Aorta (tissue), 5 donors: ENCODE measurements at regions of chr11 and their contacts with region 1.

Region 1: DNA sequence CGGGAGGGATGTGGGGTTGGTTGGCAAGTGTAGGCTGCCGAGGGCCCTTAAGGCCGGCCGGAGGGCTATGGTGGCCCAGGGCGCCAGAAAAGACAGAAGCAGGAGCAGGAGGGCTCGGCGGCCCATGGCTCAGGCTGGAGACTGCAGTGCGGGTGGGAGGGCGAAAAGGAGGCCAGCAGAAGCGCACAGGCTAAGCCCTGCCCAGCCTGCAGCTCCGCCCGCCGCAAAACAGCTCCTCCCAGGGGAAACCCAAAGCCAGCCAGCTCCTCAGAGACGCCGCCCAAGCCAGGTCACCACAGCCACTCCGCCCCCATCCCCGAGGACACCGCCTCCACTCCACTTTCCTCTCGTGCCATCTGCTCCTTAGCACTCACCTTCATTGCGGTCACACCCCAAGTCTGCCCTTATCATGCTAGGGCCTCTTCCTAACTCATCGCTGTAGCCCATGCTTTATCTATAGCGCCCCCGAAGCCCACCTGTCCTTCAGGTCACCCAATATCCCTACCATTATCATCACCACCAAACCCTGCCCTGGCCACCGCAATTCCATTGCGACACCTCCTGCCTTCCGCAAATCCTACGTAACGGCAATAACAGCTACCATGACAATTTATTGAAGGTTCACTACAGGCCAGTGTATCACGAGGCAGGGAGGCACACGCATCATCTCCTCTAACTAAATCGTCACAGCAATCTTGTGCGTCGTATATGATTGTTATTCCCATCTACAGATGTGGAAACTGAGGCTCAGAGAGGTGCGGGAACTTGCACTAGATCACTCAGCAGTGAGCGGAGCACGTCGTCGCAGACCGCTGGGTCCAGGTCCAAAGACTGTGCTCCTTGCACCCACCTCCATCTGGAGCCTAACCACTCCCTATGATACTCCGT is at the start of gene PRCP:
- DNase-seq: peak; percentile 97
- ATAC-seq: peak; percentile 96
- H3K4me3 ChIP-seq: peak within 1 kb of the TSS; percentile 51 to 62
- H3K27ac ChIP-seq: peak within 1 kb of the TSS; percentile 43 to 69
- H3K4me1 ChIP-seq: peaks cover 0 to 2% of the 10 kb centered on the region in 2 donors
- H3K27me3 ChIP-seq: no peaks in the 10 kb centered on the region
- total RNA-seq, gene PRCP: 93.7 to 183 TPM

Region 2: GRCh38 chr11:82474885-82475284 is 425.6 kb before region 1 on chr11:
- intact Hi-C with region 1: no loop called
- DNase-seq: no peak
- ATAC-seq: no peak
- H3K4me3 ChIP-seq: no peak overlapping the region
- H3K27ac ChIP-seq: no peak overlapping the region
- H3K4me1 ChIP-seq: no peaks in the 10 kb centered on the region
- H3K27me3 ChIP-seq: no peaks in the 10 kb centered on the region

Region 3: DNA sequence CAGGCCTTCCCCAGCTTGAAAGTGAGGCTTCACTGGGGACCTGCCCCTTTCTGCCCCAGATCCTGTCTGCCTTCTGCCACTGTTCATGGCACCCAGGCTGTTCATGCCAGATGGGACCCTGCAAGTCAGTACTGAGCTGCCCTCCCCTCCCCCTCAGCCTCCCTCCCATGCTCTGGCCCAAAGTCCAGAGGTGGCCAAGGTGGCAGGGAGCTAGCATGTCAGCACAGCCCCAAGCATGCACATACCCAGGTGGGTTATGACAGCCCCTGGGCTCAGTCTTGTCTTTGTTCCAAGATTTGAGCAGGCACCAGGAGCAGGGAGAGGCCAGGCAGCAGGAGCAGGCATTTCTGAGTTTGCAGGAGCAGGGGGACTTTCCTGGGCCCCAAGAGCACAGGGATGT is 45.2 kb after region 1 on chr11:
- intact Hi-C with region 1: no loop called
- DNase-seq: no peak
- ATAC-seq: no peak
- H3K4me3 ChIP-seq: no peak overlapping the region
- H3K27ac ChIP-seq: no peak overlapping the region
- H3K4me1 ChIP-seq: no peaks in the 10 kb centered on the region
- H3K27me3 ChIP-seq: no peaks in the 10 kb centered on the region

Region 4: DNA sequence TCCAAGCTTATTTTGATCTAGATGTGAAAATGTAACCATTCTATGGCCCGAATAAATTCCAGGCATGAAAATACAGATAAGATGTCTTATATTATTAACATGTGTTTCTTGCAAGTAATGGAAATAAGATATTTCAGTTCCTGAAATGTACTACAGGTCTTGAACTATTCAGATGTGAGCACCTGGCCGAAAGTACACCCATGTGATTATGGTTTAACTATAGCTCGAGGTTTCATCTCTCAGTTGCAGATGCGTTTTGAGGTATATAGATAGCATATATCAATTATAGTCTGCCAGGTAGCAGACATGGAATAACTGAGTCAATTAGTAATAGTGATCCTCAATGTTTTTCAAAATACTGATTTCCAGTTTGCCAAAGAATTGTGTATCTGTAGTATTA is 69.3 kb after region 1 on chr11:
- intact Hi-C with region 1: no loop called
- DNase-seq: no peak
- ATAC-seq: no peak
- H3K4me3 ChIP-seq: no peak overlapping the region
- H3K27ac ChIP-seq: no peak overlapping the region
- H3K4me1 ChIP-seq: no peaks in the 10 kb centered on the region
- H3K27me3 ChIP-seq: no peaks in the 10 kb centered on the region

Region 5: GRCh38 chr11:82980292-82980691 is 79.8 kb after region 1 on chr11:
- intact Hi-C with region 1: loop called in 1 of 2 experiments (anchors 10 kb)
- DNase-seq: no peak
- ATAC-seq: no peak
- H3K4me3 ChIP-seq: no peak overlapping the region
- H3K27ac ChIP-seq: no peak overlapping the region
- H3K4me1 ChIP-seq: peaks cover 0 to 9% of the 10 kb centered on the region in 2 donors
- H3K27me3 ChIP-seq: no peaks in the 10 kb centered on the region

Region 6: GRCh38 chr11:83156150-83156995 is 255.9 kb after region 1 on chr11:
- intact Hi-C with region 1: loop called (anchors 2 to 10 kb)
- DNase-seq: peak; percentile 99
- ATAC-seq: peak; percentile 97
- H3K4me3 ChIP-seq: peak overlapping the region; percentile 82 to 97
- H3K27ac ChIP-seq: peak overlapping the region; percentile 30 to 83
- H3K4me1 ChIP-seq: no peaks in the 10 kb centered on the region
- H3K27me3 ChIP-seq: no peaks in the 10 kb centered on the region

Region 7: DNA sequence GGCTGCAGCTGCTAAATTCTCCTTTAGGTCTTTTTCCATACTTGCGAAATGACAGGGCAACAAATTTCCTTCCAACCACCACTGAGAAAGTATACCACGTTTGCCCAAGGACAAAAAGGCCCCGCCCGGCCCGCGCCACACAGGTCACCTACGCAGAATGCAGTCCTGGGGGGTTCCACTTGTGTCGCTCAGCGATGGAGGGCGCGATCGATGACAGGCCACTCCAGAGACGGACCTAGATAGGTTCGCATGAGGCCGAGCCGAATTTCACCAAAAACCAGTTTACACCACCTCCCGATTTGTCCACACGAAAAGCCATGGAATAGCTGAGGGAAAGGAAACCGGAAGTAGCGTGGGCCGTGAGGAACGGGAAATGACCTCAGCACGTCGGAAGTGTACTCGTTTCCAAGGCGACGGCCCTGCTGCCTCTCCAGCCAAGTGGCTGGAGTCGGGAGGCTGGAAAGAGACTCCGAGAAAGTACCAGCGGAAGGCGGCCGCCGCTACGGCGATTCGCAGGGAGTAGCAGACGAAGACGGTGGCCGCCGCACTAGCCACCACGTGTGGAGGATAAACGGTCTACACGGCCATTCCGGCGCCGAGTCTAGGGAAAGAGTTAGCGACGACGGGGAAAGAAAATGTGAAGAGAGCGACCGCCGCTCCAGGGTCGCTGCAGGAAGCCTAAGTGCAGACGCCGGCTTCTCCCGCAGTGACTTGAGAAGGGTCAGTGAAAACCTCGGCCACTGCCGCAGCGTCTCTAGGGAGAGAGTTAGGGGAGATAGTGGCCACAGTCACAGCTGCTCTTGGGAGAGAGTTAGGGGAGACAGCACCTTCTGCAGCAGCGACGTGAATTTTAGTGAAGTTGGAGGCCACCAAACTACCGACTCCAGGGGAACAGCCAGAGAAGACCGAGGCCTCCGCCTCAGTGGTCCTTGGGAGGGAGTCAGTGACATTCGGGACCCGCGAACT is 293.1 kb after region 1 on chr11 and contains the start of gene ANKRD42:
- intact Hi-C with region 1: loop called (anchors 5 to 10 kb)
- DNase-seq: peak; percentile 96 to 97
- ATAC-seq: peak; percentile 97
- H3K4me3 ChIP-seq: peak within 1 kb of the TSS; percentile 97 to 98
- H3K27ac ChIP-seq: peak within 1 kb of the TSS; percentile 15 to 95
- H3K4me1 ChIP-seq: peaks cover 6 to 19% of the 10 kb centered on the region in 2 donors
- H3K27me3 ChIP-seq: no peaks in the 10 kb centered on the region
- total RNA-seq, gene ANKRD42: 12.9 to 14.7 TPM

Region 8: DNA sequence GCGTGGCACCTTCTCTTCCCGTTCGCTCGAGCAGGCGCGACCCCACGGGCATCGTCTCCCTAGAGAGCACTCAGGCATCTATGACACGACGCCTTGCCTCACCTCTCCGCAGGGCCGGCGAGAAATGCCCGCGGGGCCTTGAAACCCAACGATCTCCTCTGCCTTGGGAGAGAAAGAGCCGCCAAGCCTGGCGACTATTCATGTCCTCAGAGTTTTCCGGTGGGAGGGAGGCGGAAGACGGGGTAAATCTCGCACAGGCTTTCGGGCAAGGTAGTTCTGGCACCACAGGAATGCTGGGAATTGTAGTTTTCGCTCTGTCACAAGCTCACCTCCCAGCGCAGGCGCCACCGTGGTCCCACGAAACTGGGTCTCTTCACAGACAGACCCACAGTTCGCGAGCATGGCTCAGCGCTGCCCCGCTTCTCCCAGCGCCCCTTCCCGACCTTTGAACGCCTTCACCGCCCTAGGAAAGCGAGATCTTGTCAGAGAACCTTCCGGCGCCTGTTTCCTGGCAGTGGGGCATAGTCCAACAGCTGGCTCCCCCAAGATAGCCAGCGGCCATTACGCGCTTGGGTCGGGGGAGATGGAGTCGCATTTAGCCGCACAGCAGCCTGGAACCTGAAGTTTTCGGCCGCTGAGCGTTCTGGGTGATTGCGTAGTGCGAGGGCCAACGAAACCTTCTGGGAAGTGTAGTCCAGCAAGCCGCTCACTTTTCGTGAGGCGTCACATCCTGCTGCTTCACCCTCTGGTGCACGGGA is 385.4 kb after region 1 on chr11 and contains the start of gene CCDC90B:
- intact Hi-C with region 1: loop called (anchors 1 to 10 kb)
- DNase-seq: peak; percentile 97 to 98
- ATAC-seq: peak; percentile 99
- H3K4me3 ChIP-seq: peak within 1 kb of the TSS; percentile 68 to 86
- H3K27ac ChIP-seq: peak within 1 kb of the TSS in 1 of 2 donors; percentile 99
- H3K4me1 ChIP-seq: peaks cover 0 to 5% of the 10 kb centered on the region in 2 donors
- H3K27me3 ChIP-seq: no peaks in the 10 kb centered on the region
- total RNA-seq, gene CCDC90B: 35.0 to 38.6 TPM

Region 9: DNA sequence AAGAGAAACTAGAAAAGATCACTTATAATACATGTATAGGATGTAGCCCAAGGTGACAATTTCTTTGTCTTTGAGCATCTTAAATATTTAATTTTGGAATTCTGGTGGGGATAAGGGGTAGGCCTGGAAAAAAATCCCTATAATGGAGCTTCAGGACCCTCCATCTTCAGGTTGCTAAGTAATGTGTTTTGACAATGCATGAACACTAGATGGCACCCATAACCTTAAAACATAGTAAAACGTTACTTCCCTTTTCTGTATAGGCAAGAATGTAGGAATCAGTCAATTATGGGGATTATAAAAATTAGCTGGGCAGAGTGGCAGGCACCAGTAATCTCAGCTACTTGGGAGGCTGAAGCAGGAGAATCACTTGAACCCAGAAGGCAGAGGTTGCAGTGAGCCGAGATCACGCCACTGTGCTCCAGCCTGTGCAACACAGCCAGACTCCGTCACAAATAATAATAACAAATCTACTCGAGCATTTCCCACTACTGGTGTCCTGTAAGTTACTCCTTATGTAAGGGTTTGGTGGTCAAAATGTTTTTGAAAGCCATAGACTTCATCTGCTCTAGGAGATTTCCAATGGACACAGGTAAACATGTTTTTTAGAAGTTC is 927.5 kb after region 1 on chr11:
- intact Hi-C with region 1: loop called (anchors 10 kb)
- DNase-seq: no peak
- ATAC-seq: no peak
- H3K4me3 ChIP-seq: peak overlapping the region in 1 of 2 donors; percentile 41
- H3K27ac ChIP-seq: no peak overlapping the region
- H3K4me1 ChIP-seq: no peaks in the 10 kb centered on the region
- H3K27me3 ChIP-seq: no peaks in the 10 kb centered on the region